Activated B cell treated with CpG ODN at 0.5 μM for 24 hours (primary cell): ENCODE measurements at regions of chr1 and their contacts with region 1.

Region 1: GRCh38 chr1:107056426-107057196 is at the start of gene PRMT6:
- DNase-seq: peak; percentile 75
- ATAC-seq: peak; percentile 94
- H3K4me3 Mint-ChIP-seq: peak within 1 kb of the TSS; percentile 94
- H3K27ac Mint-ChIP-seq: peak within 1 kb of the TSS; percentile 90
- H3K4me1 Mint-ChIP-seq: peaks cover 31% of the 10 kb centered on the region
- H3K27me3 Mint-ChIP-seq: no peaks in the 10 kb centered on the region
- CTCF ChIP-seq: no peak
- total RNA-seq, gene PRMT6: 19.8 and 22.3 TPM in 2 replicates

Region 2: DNA sequence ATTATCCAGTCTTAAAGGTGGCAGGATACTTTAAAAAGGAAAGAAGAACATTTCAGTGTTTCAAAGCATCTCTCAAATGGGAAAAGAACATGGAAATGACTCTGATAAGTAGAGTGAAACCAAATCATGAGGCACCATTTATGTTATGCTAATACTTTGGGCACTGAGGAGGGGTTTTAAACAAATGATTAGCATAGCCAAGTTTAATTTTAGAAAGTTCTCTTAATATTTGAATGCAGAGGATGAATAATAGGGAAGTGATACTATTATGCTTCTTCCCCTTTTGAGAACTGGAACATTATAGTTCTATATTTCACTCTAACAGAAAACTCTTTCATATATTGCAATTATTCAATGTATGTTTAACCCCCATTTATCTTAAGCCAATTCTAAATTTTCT is 1182.0 kb before region 1 on chr1:
- CTCF ChIA-PET with region 1: no interaction called
- POLR2A ChIA-PET with region 1: no interaction called
- intact Hi-C with region 1: loop called (anchors 10 kb)
- DNase-seq: no peak
- ATAC-seq: peak; percentile 87
- H3K4me3 Mint-ChIP-seq: peak overlapping the region; percentile 58
- H3K27ac Mint-ChIP-seq: peak overlapping the region; percentile 88
- H3K4me1 Mint-ChIP-seq: peaks cover 36% of the 10 kb centered on the region
- H3K27me3 Mint-ChIP-seq: no peaks in the 10 kb centered on the region
- CTCF ChIP-seq: no peak

Region 3: GRCh38 chr1:107153014-107153413 is 96.4 kb after region 1 on chr1:
- CTCF ChIA-PET with region 1: no interaction called
- POLR2A ChIA-PET with region 1: no interaction called
- intact Hi-C with region 1: no loop called
- DNase-seq: no peak
- ATAC-seq: no peak
- H3K4me3 Mint-ChIP-seq: no peak overlapping the region
- H3K27ac Mint-ChIP-seq: no peak overlapping the region
- H3K4me1 Mint-ChIP-seq: no peaks in the 10 kb centered on the region
- H3K27me3 Mint-ChIP-seq: peaks cover 4% of the 10 kb centered on the region
- CTCF ChIP-seq: no peak

Region 4: DNA sequence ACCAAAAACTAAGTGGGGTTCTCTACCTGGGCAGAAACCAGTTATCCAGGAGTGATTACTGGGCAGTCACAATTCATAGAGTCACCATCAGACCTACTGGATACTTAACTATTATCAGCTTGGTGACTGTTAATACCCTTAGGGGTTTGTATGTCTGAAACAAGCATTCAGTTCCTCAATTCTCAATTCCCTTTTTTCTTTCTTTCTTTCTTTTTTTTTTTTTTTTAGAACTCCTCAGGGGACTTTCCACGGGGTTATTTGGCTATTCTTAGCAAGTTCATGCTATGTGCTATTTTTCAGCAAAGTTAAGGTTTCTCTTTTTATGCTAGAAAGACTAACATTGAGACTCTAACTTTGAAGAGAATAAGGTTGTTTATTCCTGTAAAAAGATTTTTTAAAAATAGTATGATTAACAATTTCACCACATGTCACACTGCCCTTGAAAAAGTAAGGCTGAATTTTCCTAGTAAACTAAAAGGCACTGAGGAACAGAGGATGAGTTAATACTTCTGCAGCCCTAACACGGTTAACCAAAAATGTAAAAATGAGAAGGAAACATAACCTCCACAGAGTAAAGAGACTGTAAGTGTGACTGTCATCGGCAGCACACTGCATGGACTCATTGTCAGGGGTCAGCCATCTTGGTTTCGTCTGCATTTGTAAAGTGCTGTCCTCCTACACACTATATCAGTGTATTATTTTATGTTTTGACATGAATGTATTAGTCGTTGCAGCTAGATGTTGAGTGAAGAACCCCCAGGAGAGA is 394.5 kb after region 1 on chr1:
- CTCF ChIA-PET with region 1: no interaction called
- POLR2A ChIA-PET with region 1: interaction called, 4 read pairs
- intact Hi-C with region 1: loop called (anchors 2 kb)
- DNase-seq: no peak
- ATAC-seq: peak; percentile 74
- H3K4me3 Mint-ChIP-seq: peak overlapping the region; percentile 75
- H3K27ac Mint-ChIP-seq: peak overlapping the region; percentile 97
- H3K4me1 Mint-ChIP-seq: peaks cover 87% of the 10 kb centered on the region
- H3K27me3 Mint-ChIP-seq: no peaks in the 10 kb centered on the region
- CTCF ChIP-seq: no peak